ENCODE measurements at regions of chr17 and their contacts with region 1.

Region 1: GRCh38 chr17:34542700-34543336 is 36.6 kb upstream of the TMEM132E start:
- DNase-seq: peak; percentile 50
- H3K4me3 Mint-ChIP-seq: no peak overlapping the region
- H3K27ac Mint-ChIP-seq: no peak overlapping the region
- H3K4me1 Mint-ChIP-seq: no peaks in the 10 kb centered on the region
- H3K27me3 Mint-ChIP-seq: peaks cover 83% of the 10 kb centered on the region
- CTCF ChIP-seq: peak; percentile 91

Region 2: GRCh38 chr17:34511265-34511664 is 31.6 kb before region 1 on chr17:
- CTCF ChIA-PET with region 1: no interaction called
- intact Hi-C with region 1: no loop called
- DNase-seq: no peak
- H3K4me3 Mint-ChIP-seq: no peak overlapping the region
- H3K27ac Mint-ChIP-seq: no peak overlapping the region
- H3K4me1 Mint-ChIP-seq: no peaks in the 10 kb centered on the region
- H3K27me3 Mint-ChIP-seq: peaks cover 98% of the 10 kb centered on the region
- CTCF ChIP-seq: no peak

Region 3: DNA sequence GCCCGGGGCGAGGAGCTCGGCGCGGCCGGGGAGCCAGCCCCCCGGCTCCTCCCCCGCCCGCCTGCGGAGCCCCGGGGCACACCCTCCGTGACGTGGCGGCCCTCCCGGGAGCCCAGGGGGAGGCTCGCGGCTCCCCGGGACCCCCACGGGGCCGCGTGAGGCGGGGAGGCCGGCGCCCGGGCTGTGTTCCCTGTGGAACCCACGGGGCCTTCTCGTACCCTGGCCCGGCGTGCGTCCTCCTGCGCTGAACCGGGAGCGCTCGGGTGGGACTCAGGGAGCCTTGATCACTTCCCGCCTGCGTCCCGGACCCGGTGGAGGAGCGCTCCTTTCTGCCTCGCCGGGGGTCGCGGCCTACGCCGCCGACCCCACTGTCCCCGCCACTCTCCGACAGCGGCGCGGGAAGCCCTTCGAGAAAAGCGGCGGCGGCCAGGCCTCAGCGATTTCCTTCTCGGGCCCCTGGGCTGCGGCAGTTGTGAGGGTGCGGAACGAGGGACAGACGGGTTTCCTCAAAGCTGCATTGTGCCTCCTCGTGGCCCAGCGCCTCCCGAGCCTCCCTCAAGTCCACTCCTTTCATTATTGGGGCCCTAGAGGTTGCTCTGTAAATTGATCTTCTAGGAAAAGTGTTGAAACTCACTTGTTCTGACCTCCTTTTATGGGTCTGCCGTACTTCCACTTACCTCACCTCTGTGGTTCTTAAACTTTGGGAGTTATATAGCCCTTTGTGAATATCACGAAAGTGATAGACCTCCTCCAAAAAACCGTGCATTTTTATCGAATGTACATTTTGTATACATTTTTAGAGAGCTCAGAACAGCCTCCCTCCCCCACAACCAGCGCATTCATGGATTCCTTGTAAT is 438.1 kb after region 1 on chr17:
- CTCF ChIA-PET with region 1: interaction called, 7 read pairs
- intact Hi-C with region 1: loop called (anchors 2 kb)
- DNase-seq: peak; percentile 78
- H3K4me3 Mint-ChIP-seq: peak overlapping the region; percentile 87
- H3K27ac Mint-ChIP-seq: peak overlapping the region; percentile 95
- H3K4me1 Mint-ChIP-seq: peaks cover 12% of the 10 kb centered on the region
- H3K27me3 Mint-ChIP-seq: no peaks in the 10 kb centered on the region
- CTCF ChIP-seq: peak; percentile 42

Region 4: GRCh38 chr17:35119368-35120165 is 576.7 kb after region 1 on chr17 and contains the start of gene RAD51D:
- CTCF ChIA-PET with region 1: interaction called, 3 read pairs
- intact Hi-C with region 1: loop called (anchors 5 kb)
- DNase-seq: peak; percentile 83
- H3K4me3 Mint-ChIP-seq: peak within 1 kb of the TSS; percentile 75
- H3K27ac Mint-ChIP-seq: peak within 1 kb of the TSS; percentile 71
- H3K4me1 Mint-ChIP-seq: peaks cover 27% of the 10 kb centered on the region
- H3K27me3 Mint-ChIP-seq: no peaks in the 10 kb centered on the region
- CTCF ChIP-seq: peak; percentile 91
- total RNA-seq, gene RAD51D: 16.8 and 17.1 TPM in 2 replicates